ENCODE measurements at regions of chr1 and their contacts with region 1.

Region 1: GRCh38 chr1:32240140-32240951 is 6.7 kb upstream of the FAM167B start:
- DNase-seq: peak; percentile 61 to 72
- H3K4me3 ChIP-seq: peak overlapping the region; percentile 56
- H3K4me3 Mint-ChIP-seq: peak overlapping the region; percentile 79
- H3K27ac Mint-ChIP-seq: peak overlapping the region; percentile 83
- H3K4me1 ChIP-seq: no peaks in the 10 kb centered on the region
- H3K4me1 Mint-ChIP-seq: no peaks in the 10 kb centered on the region
- H3K27me3 ChIP-seq: no peaks in the 10 kb centered on the region
- H3K27me3 Mint-ChIP-seq: no peaks in the 10 kb centered on the region
- CTCF ChIP-seq: no peak

Region 2: GRCh38 chr1:32159189-32159885 is 81.0 kb before region 1 on chr1:
- CTCF ChIA-PET with region 1: no interaction called
- POLR2A ChIA-PET with region 1: no interaction called
- intact Hi-C with region 1: no loop called
- DNase-seq: no peak
- H3K4me3 ChIP-seq: no peak overlapping the region
- H3K4me3 Mint-ChIP-seq: no peak overlapping the region
- H3K27ac Mint-ChIP-seq: no peak overlapping the region
- H3K4me1 ChIP-seq: no peaks in the 10 kb centered on the region
- H3K4me1 Mint-ChIP-seq: no peaks in the 10 kb centered on the region
- H3K27me3 ChIP-seq: no peaks in the 10 kb centered on the region
- H3K27me3 Mint-ChIP-seq: no peaks in the 10 kb centered on the region
- CTCF ChIP-seq: no peak

Region 3: DNA sequence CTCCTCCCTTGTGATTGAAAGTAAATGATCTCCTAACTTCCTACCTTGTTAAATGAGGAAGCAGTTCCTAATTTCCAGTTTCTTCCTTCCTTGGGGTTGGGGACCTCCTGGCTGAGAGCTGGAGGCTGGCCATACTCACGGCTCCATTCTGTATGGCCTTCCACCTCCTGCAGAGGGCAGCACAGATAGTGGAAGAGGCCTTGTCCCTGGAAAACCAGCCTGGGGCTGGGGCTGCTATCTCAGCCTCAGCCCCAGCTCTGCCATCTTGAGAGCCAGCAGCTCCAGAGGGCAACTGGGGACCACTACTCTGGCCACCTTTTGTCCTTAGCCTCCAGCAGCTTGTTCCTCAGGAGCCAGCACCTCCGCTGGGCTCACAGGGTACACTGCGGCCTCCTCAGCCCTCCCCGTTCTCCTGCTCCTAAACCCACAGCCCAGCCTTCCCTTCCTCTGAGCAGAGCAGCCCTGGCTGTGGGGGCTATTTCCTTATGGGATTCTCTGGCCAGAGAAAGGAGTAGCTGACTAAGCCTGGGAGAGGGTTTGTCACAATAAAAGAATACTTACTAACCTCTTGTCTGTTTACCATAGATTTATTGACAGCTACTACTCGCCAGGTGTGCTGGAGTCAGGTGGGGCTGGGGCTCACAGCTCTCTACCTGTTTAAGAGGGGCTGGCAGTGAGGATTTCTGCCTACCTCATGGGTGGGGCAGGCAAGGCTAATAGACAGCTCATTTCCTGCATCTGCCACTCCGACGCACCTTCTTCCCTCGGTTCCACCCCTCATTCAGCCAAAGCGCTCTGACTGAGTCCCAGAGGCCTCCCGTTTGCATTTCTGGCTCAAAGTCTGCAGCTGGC is 24.5 kb before region 1 on chr1:
- CTCF ChIA-PET with region 1: interaction called, 11 read pairs
- POLR2A ChIA-PET with region 1: interaction called, 4 read pairs
- intact Hi-C with region 1: no loop called
- DNase-seq: peak; percentile 65 to 70
- H3K4me3 ChIP-seq: no peak overlapping the region
- H3K4me3 Mint-ChIP-seq: no peak overlapping the region
- H3K27ac Mint-ChIP-seq: no peak overlapping the region
- H3K4me1 ChIP-seq: no peaks in the 10 kb centered on the region
- H3K4me1 Mint-ChIP-seq: no peaks in the 10 kb centered on the region
- H3K27me3 ChIP-seq: no peaks in the 10 kb centered on the region
- H3K27me3 Mint-ChIP-seq: no peaks in the 10 kb centered on the region
- CTCF ChIP-seq: peak; percentile 58 to 67

Region 4: DNA sequence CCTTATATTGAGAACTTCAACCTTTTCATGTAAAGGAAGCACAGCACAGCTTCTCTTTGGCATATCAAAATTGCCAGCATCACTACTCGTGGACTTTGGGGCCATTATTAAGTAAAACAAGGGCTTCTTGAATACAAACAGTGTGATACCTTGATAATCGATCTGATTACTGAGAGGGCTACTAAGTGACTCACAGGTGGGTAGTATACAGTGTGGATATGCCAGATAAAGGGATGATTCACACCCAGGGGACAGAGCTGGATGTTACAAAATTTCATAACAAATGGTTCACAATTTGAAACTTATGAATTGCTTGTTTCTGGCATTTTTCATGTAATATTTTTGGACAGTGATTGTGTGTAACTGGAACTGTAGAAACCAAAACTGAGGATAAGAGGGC is 67.0 kb after region 1 on chr1:
- CTCF ChIA-PET with region 1: no interaction called
- POLR2A ChIA-PET with region 1: no interaction called
- intact Hi-C with region 1: no loop called
- DNase-seq: no peak
- H3K4me3 ChIP-seq: no peak overlapping the region
- H3K4me3 Mint-ChIP-seq: no peak overlapping the region
- H3K27ac Mint-ChIP-seq: no peak overlapping the region
- H3K4me1 ChIP-seq: no peaks in the 10 kb centered on the region
- H3K4me1 Mint-ChIP-seq: peaks cover 15% of the 10 kb centered on the region
- H3K27me3 ChIP-seq: no peaks in the 10 kb centered on the region
- H3K27me3 Mint-ChIP-seq: no peaks in the 10 kb centered on the region
- CTCF ChIP-seq: no peak

Region 5: DNA sequence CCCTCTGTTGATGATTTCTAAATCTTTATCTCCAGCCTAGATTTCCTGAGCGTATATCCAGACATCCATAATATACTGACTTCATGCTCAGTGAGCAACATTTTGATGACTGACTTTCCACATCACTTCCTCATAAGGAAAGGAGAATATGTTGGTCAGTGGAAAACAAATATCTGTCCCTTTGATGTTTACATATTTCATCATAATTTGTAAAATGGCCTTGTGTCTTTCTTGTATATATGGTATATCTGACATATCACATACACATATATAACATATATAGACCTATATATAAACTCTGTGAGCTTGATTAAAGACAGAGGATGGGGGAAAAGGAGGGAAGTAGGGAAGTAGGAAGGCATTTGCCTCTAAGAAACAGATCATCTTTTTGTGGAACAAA is 317.5 kb after region 1 on chr1:
- CTCF ChIA-PET with region 1: no interaction called
- POLR2A ChIA-PET with region 1: no interaction called
- intact Hi-C with region 1: no loop called
- DNase-seq: no peak
- H3K4me3 ChIP-seq: no peak overlapping the region
- H3K4me3 Mint-ChIP-seq: no peak overlapping the region
- H3K27ac Mint-ChIP-seq: no peak overlapping the region
- H3K4me1 ChIP-seq: no peaks in the 10 kb centered on the region
- H3K4me1 Mint-ChIP-seq: peaks cover 6% of the 10 kb centered on the region
- H3K27me3 ChIP-seq: no peaks in the 10 kb centered on the region
- H3K27me3 Mint-ChIP-seq: no peaks in the 10 kb centered on the region
- CTCF ChIP-seq: no peak

Measured in Caco-2 (cell line).